ENCODE measurements at regions of chr4 and their contacts with region 1.

Region 1: DNA sequence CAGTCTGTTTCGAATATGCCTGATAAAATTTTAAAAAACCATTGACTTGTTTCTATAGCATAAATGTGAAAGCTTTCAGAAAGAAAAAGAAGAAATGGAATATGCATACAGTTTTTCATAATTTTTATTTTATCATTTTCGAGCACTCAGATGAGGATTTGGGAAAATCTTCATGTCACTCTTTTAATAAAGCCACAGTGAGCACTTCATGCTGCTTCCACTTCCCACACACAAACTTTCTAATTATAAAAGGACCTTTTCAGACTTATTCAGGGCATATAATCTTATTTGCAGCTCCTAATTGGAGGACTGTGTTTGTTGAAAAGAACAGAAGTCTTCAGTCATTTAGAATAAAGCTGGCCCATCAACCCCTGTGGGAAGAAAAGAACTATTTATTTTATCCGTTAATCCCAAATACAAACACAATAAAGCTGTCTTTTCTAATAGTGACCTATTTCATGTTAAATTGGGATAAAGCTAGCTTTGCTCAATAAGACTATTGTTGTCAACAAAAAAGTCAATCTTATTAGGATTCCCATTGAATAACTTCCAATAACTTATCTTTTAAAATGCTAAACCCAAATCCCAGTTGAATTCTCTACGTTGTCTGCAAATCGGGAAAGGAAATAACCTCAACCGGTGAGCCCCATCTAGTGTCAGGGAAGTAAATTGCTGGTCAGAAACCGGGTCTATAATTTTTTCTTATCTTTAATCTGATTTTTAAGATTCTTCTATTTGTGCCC is 211.5 kb downstream of the PDGFRA start:
- DNase-seq: no peak
- ATAC-seq: no peak
- H3K4me3 ChIP-seq: no peak overlapping the region
- H3K27ac ChIP-seq: no peak overlapping the region
- H3K4me1 ChIP-seq: no peaks in the 10 kb centered on the region
- H3K27me3 ChIP-seq: no peaks in the 10 kb centered on the region; a peak in 1 of 5 replicates
- CTCF ChIP-seq: peak; percentile 33
- EP300 ChIP-seq: no peak
- POLR2A ChIP-seq: no peak
- RAD21 ChIP-seq: no peak

Region 2: DNA sequence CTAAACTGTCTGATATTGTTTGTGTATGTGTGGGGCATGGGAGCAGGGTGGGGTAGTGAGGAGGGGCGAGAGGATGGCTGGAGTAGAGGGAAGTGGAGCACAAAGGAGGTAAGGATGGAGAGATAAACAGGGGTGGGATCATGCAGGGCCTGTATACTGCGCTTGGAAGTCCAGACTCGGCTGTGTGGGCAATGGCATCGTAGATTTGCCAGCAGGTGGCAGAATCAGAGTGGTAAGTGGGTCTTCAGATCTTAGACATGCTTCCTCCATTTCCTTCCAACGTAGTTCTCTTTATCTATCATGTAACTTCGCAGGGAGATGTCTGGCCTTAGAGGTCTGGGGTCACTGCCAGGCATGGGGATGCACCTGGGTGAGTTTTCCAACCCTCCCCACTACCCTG is 56.0 kb before region 1 on chr4:
- CTCF ChIA-PET with region 1: no interaction called
- POLR2A ChIA-PET with region 1: no interaction called
- in situ Hi-C with region 1: no loop called
- intact Hi-C with region 1: loop called (anchors 1 kb)
- DNase-seq: peak; percentile 3
- ATAC-seq: peak; percentile 68
- H3K4me3 ChIP-seq: no peak overlapping the region
- H3K27ac ChIP-seq: no peak overlapping the region
- H3K4me1 ChIP-seq: no peaks in the 10 kb centered on the region
- H3K27me3 ChIP-seq: peaks cover 2 to 3% of the 10 kb centered on the region in 2 experiments; a peak in 1 of 5 replicates
- CTCF ChIP-seq: peak; percentile 45
- EP300 ChIP-seq: no peak
- POLR2A ChIP-seq: no peak
- RAD21 ChIP-seq: no peak

Measured in HepG2 (cell line).